Activated CD8-positive, alpha-beta T cell treated with anti-CD3 and anti-CD28 coated beads for 36 hours (primary cell): ENCODE measurements at regions of chr2 and their contacts with region 1.

Region 1: DNA sequence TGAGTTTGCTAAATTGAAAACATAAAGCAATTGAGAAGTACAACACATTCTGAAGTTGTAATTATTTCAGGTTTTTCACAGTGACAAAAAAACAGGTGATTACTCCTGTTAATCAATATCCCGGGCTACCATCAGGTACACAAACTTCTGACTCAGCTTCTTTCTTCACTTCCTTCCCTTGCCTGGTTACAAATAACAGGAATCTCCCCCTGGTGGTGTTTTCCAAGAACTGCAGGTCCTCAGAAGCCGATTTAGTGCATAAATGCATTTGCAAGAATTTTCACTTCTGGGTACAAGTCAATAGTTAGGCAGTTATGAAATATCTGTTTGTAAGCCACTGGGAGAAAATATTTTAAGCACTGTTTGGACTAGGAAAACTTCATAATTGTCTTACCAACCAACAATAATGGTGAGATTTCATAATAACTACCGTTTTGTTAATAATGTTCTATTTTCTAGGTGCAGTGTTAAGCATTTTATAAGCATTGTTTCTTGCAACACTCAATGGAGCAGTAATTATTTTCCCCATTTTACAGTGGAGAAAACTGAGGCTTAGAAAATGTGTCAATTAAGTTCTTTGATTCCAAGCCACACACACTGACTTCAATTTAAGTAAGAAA is 12.4 kb upstream of the GMCL1 start:
- DNase-seq: peak; percentile 88
- ATAC-seq: peak; percentile 89
- H3K4me3 Mint-ChIP-seq: no peak overlapping the region
- H3K27ac Mint-ChIP-seq: no peak overlapping the region
- H3K4me1 Mint-ChIP-seq: peaks cover 4% of the 10 kb centered on the region
- H3K27me3 Mint-ChIP-seq: no peaks in the 10 kb centered on the region
- CTCF ChIP-seq: peak; percentile 94

Region 2: GRCh38 chr2:69741619-69742466 is 75.2 kb before region 1 on chr2 and contains the start of gene ANXA4:
- CTCF ChIA-PET with region 1: interaction called, 37 read pairs
- POLR2A ChIA-PET with region 1: interaction called, 3 read pairs
- intact Hi-C with region 1: no loop called
- DNase-seq: peak; percentile 65
- ATAC-seq: peak; percentile 84
- H3K4me3 Mint-ChIP-seq: peak within 1 kb of the TSS; percentile 83
- H3K27ac Mint-ChIP-seq: peak within 1 kb of the TSS; percentile 84
- H3K4me1 Mint-ChIP-seq: peaks cover 11% of the 10 kb centered on the region
- H3K27me3 Mint-ChIP-seq: peaks cover 3% of the 10 kb centered on the region
- CTCF ChIP-seq: no peak
- total RNA-seq, gene ANXA4: 14.6 to 17.5 TPM

Region 3: GRCh38 chr2:69770193-69771146 is 46.6 kb before region 1 on chr2:
- CTCF ChIA-PET with region 1: interaction called, 9 read pairs
- POLR2A ChIA-PET with region 1: no interaction called
- intact Hi-C with region 1: loop called (anchors 5 kb)
- DNase-seq: peak; percentile 49
- ATAC-seq: peak; percentile 37
- H3K4me3 Mint-ChIP-seq: no peak overlapping the region
- H3K27ac Mint-ChIP-seq: peak overlapping the region; percentile 79
- H3K4me1 Mint-ChIP-seq: peaks cover 60% of the 10 kb centered on the region
- H3K27me3 Mint-ChIP-seq: no peaks in the 10 kb centered on the region
- CTCF ChIP-seq: no peak

Region 4: DNA sequence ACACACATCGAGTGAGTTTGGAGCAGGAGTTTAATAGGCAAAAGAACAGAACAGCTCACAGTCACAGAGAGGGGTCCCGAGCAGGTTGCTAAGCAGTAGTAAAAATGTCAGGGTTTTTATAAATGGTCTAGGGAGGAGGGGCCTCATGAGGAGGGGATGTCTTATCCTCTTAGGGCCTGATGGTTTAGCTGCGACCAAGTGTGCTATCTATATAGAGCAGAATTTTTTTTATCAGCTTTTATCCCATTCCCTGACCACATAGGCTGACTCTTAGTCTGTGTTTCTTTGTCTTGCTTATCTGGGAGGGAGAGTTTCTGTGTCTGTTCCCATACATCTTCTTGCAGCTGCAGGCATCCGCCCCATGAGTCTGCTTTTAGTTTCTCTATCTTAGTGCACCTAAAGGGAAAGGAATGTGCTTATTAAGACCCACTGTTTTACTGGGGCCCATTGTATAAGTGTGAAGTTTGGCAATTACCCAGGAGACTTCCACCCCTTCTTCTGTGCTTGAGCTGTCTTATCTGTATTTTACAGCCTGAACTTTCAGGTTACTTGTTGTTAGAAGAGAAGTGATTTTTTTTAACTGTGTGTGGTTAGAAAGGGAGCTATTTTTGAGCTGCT is 18.0 kb before region 1 on chr2:
- CTCF ChIA-PET with region 1: interaction called, 73 read pairs
- POLR2A ChIA-PET with region 1: no interaction called
- intact Hi-C with region 1: no loop called
- DNase-seq: no peak
- ATAC-seq: peak; percentile 30
- H3K4me3 Mint-ChIP-seq: no peak overlapping the region
- H3K27ac Mint-ChIP-seq: no peak overlapping the region
- H3K4me1 Mint-ChIP-seq: peaks cover 7% of the 10 kb centered on the region
- H3K27me3 Mint-ChIP-seq: peaks cover 4% of the 10 kb centered on the region
- CTCF ChIP-seq: no peak

Region 5: DNA sequence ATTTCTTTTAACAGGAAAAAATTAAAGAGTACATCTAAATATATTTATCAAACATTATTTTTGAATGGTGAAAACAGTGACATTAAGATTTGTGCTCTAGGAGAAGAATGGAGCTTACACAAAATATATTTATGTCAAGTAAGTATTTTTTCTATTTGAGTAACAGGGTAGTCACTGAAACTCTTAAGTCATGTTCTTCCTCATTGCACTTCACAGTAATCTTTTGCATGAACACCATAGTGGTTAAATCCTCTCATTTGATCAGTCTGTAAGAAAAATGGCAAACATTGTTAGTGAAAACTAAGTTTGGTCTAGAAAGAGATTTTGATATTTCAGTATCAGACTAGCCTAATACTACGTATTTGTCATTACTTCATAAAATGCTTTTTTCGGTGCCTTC is 20.5 kb after region 1 on chr2:
- CTCF ChIA-PET with region 1: no interaction called
- POLR2A ChIA-PET with region 1: no interaction called
- intact Hi-C with region 1: no loop called
- DNase-seq: no peak
- ATAC-seq: no peak
- H3K4me3 Mint-ChIP-seq: no peak overlapping the region
- H3K27ac Mint-ChIP-seq: no peak overlapping the region
- H3K4me1 Mint-ChIP-seq: peaks cover 41% of the 10 kb centered on the region
- H3K27me3 Mint-ChIP-seq: no peaks in the 10 kb centered on the region
- CTCF ChIP-seq: no peak

Region 6: DNA sequence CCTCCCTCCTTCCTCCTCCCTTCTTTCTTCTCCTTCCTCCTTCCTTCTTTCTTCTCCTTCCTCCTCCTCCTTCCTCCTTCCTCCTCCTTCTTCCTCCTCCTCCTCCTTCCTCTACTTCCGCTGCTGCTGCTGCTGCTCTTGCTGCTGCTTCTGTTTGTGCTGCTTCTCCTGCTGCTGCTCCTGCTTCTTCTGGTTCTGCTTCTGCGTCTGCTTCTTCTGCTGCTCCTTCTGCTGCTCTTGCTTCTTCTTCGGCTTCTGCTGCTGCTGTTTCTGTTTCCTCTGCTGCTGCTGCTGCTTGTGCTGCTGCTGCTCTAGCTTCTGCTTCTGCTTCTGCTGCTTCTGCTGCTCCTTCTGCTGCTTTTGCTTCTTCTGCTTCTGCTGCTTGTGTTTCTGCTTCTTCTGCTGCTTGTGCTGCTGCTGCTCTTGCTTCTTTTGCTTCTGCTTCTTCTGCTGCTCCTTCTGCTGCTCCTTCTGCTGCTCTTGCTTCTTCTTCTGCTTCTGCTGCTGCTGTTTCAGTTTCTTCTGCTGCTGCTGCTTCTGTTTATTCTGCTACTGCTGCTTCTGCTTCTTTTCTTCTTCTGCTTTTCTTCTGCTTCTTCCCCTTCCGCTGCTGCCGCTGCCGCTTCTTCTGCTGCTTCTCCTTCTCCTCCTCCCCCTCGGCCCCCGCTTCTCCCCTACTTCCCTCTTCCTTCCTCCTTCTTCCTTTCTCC is 85.3 kb after region 1 on chr2:
- CTCF ChIA-PET with region 1: no interaction called
- POLR2A ChIA-PET with region 1: no interaction called
- intact Hi-C with region 1: no loop called
- DNase-seq: peak; percentile 12
- ATAC-seq: peak; percentile 24
- H3K4me3 Mint-ChIP-seq: peak overlapping the region; percentile 77
- H3K27ac Mint-ChIP-seq: peak overlapping the region; percentile 83
- H3K4me1 Mint-ChIP-seq: peaks cover 38% of the 10 kb centered on the region
- H3K27me3 Mint-ChIP-seq: no peaks in the 10 kb centered on the region
- CTCF ChIP-seq: no peak